ENCODE measurements at regions of chr16 and their contacts with region 1.

Region 1: GRCh38 chr16:26605626-26606271 is 461.0 kb upstream of the C16orf82 start:
- DNase-seq: no peak
- ATAC-seq: no peak
- H3K4me3 ChIP-seq: no peak overlapping the region
- H3K4me3 Mint-ChIP-seq: no peak overlapping the region
- H3K27ac ChIP-seq: no peak overlapping the region
- H3K27ac Mint-ChIP-seq: no peak overlapping the region
- H3K4me1 ChIP-seq: peaks cover 9% of the 10 kb centered on the region
- H3K4me1 Mint-ChIP-seq: no peaks in the 10 kb centered on the region
- H3K27me3 ChIP-seq: peaks cover 0 to 1% of the 10 kb centered on the region in 2 experiments
- H3K27me3 Mint-ChIP-seq: peaks cover 17% of the 10 kb centered on the region
- CTCF ChIP-seq: no peak

Region 2: DNA sequence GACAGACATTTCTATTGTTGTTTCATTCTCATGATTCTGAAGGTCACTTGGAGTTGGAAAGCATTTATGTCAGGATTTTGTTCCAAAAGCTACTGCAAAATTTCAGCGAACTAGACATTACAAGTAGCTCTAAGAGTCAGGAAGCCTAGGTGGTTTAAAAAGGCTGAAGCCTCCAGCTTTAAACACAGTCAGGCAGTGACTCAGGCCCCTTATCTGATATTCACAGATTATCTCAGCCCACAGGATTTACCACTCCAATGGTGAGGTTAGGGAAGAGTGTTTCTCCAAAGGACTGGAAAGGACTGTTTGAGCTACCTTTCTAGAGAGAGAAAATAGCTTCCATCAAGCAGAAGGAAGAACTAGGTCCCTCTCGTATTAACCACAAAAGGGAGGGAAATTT is 163.4 kb before region 1 on chr16:
- CTCF ChIA-PET with region 1: no interaction called
- POLR2A ChIA-PET with region 1: no interaction called
- intact Hi-C with region 1: no loop called
- DNase-seq: no peak
- ATAC-seq: no peak
- H3K4me3 ChIP-seq: no peak overlapping the region
- H3K4me3 Mint-ChIP-seq: no peak overlapping the region
- H3K27ac ChIP-seq: no peak overlapping the region
- H3K27ac Mint-ChIP-seq: no peak overlapping the region
- H3K4me1 ChIP-seq: no peaks in the 10 kb centered on the region
- H3K4me1 Mint-ChIP-seq: no peaks in the 10 kb centered on the region
- H3K27me3 ChIP-seq: no peaks in the 10 kb centered on the region
- H3K27me3 Mint-ChIP-seq: peaks cover 9% of the 10 kb centered on the region
- CTCF ChIP-seq: no peak

Region 3: DNA sequence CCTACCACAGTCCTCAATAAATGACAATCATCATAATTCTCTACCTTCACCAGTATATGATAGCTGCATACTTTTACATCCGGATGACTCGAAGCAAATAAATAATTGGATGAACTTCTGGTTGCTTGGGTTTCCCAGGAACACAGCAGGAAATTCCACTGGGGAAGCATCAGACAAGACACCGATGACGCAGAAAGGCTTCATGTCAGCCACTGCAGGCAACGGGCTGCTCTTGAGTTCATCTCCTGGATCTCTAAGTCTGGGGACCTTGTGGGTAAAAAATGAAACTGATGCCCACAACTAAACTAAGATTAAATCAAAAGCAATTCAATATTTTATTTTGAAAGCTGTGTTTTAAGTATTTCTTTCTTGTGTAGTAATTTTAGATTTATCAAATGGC is 11.1 kb before region 1 on chr16:
- CTCF ChIA-PET with region 1: no interaction called
- POLR2A ChIA-PET with region 1: no interaction called
- intact Hi-C with region 1: no loop called
- DNase-seq: no peak
- ATAC-seq: no peak
- H3K4me3 ChIP-seq: no peak overlapping the region
- H3K4me3 Mint-ChIP-seq: no peak overlapping the region
- H3K27ac ChIP-seq: no peak overlapping the region
- H3K27ac Mint-ChIP-seq: no peak overlapping the region
- H3K4me1 ChIP-seq: peaks cover 18% of the 10 kb centered on the region
- H3K4me1 Mint-ChIP-seq: peaks cover 9% of the 10 kb centered on the region
- H3K27me3 ChIP-seq: peaks cover 0 to 5% of the 10 kb centered on the region in 2 experiments
- H3K27me3 Mint-ChIP-seq: peaks cover 22% of the 10 kb centered on the region
- CTCF ChIP-seq: no peak

Region 4: GRCh38 chr16:26665162-26665939 is 59.6 kb after region 1 on chr16:
- CTCF ChIA-PET with region 1: no interaction called
- POLR2A ChIA-PET with region 1: no interaction called
- intact Hi-C with region 1: loop called in 1 of 2 experiments (anchors 10 kb)
- DNase-seq: no peak
- ATAC-seq: no peak
- H3K4me3 ChIP-seq: no peak overlapping the region
- H3K4me3 Mint-ChIP-seq: no peak overlapping the region
- H3K27ac ChIP-seq: no peak overlapping the region
- H3K27ac Mint-ChIP-seq: no peak overlapping the region
- H3K4me1 ChIP-seq: peaks cover 4% of the 10 kb centered on the region
- H3K4me1 Mint-ChIP-seq: no peaks in the 10 kb centered on the region
- H3K27me3 ChIP-seq: peaks cover 0 to 4% of the 10 kb centered on the region in 2 experiments
- H3K27me3 Mint-ChIP-seq: peaks cover 21% of the 10 kb centered on the region
- CTCF ChIP-seq: no peak